Activated naive CD8-positive, alpha-beta T cell treated with anti-CD3 and anti-CD28 coated beads, Interleukin-2, amount 10 ng/mL, durations not matched to agents 7 days and 5 days (primary cell): ENCODE measurements at regions of chr7 and their contacts with region 1.

Region 1: GRCh38 chr7:104943502-104944343 is 70.3 kb upstream of the KMT2E start:
- DNase-seq: peak; percentile 68
- ATAC-seq: peak; percentile 56
- H3K4me3 Mint-ChIP-seq: peak overlapping the region; percentile 92
- H3K27ac Mint-ChIP-seq: peak overlapping the region; percentile 100
- H3K4me1 Mint-ChIP-seq: peaks cover 58% of the 10 kb centered on the region
- H3K27me3 Mint-ChIP-seq: no peaks in the 10 kb centered on the region

Region 2: GRCh38 chr7:104927055-104927454 is 16.7 kb before region 1 on chr7:
- POLR2A ChIA-PET with region 1: interaction called, 21 read pairs
- DNase-seq: no peak
- ATAC-seq: no peak
- H3K4me3 Mint-ChIP-seq: no peak overlapping the region
- H3K27ac Mint-ChIP-seq: no peak overlapping the region
- H3K4me1 Mint-ChIP-seq: peaks cover 5% of the 10 kb centered on the region
- H3K27me3 Mint-ChIP-seq: no peaks in the 10 kb centered on the region

Region 3: DNA sequence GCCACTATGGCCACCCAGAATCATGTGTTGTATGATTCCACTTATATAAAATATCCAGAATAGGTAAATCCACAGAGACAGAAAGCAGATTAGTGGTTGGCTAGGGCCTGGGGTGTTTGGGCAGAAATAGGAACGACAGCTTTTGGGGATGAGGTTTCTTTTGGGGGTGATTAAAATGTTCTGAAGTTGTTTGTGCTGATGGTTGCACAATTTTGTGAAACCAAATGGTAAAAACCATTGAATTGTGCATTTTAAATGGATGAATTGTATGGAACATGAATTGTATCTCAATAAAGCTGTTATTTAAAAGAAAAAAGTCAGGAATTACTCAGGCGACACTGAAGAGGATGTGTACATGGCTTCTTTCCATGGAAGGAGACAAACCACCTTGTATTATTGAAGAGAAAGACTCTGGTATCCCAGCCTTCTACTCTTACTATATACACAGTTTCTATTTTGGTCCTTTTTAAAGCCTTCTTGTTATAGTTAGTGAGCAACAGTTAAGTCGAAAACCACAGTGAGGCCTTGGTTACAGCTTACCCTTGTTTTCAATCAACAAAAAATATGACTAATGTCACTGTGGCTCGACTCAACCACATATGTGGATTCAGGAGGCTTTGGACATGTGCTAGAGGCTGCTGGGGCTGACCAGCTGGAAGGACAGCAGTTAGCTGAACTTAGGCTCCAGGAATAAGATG is 13.2 kb after region 1 on chr7:
- POLR2A ChIA-PET with region 1: interaction called, 46 read pairs
- DNase-seq: no peak
- ATAC-seq: peak; percentile 75
- H3K4me3 Mint-ChIP-seq: peak overlapping the region; percentile 9
- H3K27ac Mint-ChIP-seq: peak overlapping the region; percentile 87
- H3K4me1 Mint-ChIP-seq: peaks cover 26% of the 10 kb centered on the region
- H3K27me3 Mint-ChIP-seq: no peaks in the 10 kb centered on the region

Region 4: GRCh38 chr7:105013221-105013815 is 69.6 kb after region 1 on chr7:
- POLR2A ChIA-PET with region 1: interaction called, 143 read pairs
- DNase-seq: peak; percentile 88
- ATAC-seq: peak; percentile 60
- H3K4me3 Mint-ChIP-seq: peak overlapping the region; percentile 94
- H3K27ac Mint-ChIP-seq: peak overlapping the region; percentile 100
- H3K4me1 Mint-ChIP-seq: peaks cover 30% of the 10 kb centered on the region
- H3K27me3 Mint-ChIP-seq: no peaks in the 10 kb centered on the region